CD4-positive, alpha-beta T cell (primary cell): ENCODE measurements at regions of chr17 and their contacts with region 1.

Region 1: DNA sequence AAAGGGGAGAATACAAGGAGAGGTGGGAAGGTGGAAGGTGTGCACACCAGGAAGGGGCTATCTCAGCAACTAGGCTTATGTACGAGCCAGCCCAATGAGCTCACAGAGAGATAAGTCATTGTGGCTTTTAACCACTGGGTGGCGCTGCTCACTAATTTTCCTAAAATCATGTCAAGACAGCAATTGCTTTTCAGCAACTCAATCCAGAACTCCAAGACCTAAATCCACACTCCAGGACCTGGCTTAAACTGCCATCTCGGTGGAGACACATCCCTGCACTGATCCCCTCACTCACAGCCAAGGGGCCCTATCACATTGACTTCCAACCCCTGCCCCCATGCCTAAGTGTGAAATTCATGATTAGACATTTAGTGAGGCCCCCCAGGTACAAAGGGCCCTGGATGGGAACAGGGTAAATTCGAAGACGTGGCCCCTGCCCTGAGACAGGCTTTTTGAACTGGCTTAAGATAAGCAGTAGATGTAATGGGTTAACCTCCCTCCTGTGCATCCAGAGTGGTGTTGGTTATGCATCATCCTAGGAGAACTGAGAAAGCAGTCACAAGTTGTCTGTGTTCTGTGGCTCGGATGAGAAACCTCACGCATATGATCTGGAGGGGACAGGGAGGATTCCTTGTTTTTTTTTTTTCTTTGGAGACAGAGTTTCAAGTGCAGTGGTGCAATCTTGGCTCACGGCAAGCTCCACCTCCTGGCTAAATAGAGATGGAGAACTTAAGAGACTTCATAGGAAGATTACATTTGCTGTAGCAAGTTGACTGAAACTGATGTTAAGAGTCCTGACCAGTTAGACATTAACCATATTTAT is 11.5 kb downstream of the CCL16 start:
- DNase-seq: peak; percentile 26 to 80 (median 56)
- ATAC-seq: no peak
- H3K4me3 ChIP-seq: no peak overlapping the region
- H3K4me3 Mint-ChIP-seq: no peak overlapping the region
- H3K27ac ChIP-seq: no peak overlapping the region
- H3K27ac Mint-ChIP-seq: no peak overlapping the region
- H3K4me1 ChIP-seq: peaks cover 3% of the 10 kb centered on the region
- H3K4me1 Mint-ChIP-seq: no peaks in the 10 kb centered on the region
- H3K27me3 ChIP-seq: no peaks in the 10 kb centered on the region
- H3K27me3 Mint-ChIP-seq: peaks cover 6% of the 10 kb centered on the region
- CTCF ChIP-seq: peak; percentile 72

Region 2: DNA sequence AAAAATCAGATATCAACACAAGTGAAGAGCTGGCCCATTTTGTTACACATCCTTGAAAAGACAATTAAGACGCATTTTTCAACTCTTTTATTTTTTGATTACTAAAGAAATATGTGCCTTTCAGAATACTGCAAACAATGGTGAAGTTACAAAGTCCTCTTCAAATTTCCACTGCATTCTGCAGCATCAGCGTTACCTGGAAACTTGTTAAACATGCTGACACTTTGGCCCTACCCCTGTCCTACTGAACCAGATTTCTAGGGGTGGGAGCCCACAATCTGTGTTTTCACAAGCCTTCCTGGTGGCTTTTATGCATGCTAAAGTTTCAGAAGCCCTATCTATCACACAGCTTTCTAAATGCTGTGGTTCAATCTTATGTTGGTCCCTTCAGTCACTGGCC is 21.3 kb after region 1 on chr17:
- CTCF ChIA-PET with region 1: no interaction called
- POLR2A ChIA-PET with region 1: no interaction called
- intact Hi-C with region 1: no loop called
- DNase-seq: no peak
- ATAC-seq: no peak
- H3K4me3 ChIP-seq: no peak overlapping the region
- H3K4me3 Mint-ChIP-seq: no peak overlapping the region
- H3K27ac ChIP-seq: no peak overlapping the region
- H3K27ac Mint-ChIP-seq: no peak overlapping the region
- H3K4me1 ChIP-seq: no peaks in the 10 kb centered on the region
- H3K4me1 Mint-ChIP-seq: no peaks in the 10 kb centered on the region
- H3K27me3 ChIP-seq: peaks cover 0 to 5% of the 10 kb centered on the region in 2 experiments
- H3K27me3 Mint-ChIP-seq: peaks cover 11% of the 10 kb centered on the region
- CTCF ChIP-seq: no peak

Region 3: DNA sequence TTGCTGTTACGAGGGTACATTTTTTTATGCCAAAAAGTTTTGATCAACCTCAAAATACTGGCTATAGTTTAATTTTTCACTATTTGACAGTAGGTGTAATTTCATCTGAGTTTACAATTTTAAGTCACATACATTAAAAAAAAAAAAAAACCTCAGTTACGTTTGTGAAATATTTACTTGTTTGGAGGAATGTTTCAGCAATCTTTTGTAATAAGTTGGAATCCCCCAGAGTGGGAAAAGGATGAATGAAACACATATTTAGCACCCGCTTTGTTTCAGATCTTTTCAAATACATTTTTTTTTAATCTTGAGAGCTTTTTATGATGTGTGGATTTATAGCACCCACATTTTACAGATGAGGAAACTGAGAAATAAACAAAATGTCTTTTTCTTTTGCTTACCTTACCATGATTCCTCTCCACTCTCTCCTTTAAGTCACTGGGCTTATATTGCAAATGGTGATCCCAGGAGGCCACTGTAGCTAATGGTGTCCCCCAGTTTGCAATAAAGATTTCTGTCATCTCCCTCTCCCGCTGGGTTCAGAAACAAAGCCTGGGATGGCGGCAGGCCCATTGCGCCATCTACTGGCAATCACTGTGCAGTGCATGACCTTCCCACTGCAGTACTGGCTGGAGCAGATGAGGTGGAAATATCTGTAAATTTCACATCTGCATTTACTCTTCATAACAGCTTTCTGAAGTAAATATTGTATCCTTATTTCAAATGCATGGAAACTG is 179.0 kb after region 1 on chr17:
- CTCF ChIA-PET with region 1: interaction called, 3 read pairs
- POLR2A ChIA-PET with region 1: no interaction called
- intact Hi-C with region 1: loop called (anchors 1 to 10 kb)
- DNase-seq: peak; percentile 24 to 79 (median 49)
- ATAC-seq: peak; percentile 71
- H3K4me3 ChIP-seq: no peak overlapping the region
- H3K4me3 Mint-ChIP-seq: no peak overlapping the region
- H3K27ac ChIP-seq: no peak overlapping the region
- H3K27ac Mint-ChIP-seq: no peak overlapping the region
- H3K4me1 ChIP-seq: peaks cover 4% of the 10 kb centered on the region
- H3K4me1 Mint-ChIP-seq: no peaks in the 10 kb centered on the region
- H3K27me3 ChIP-seq: peaks cover 13% of the 10 kb centered on the region in 2 experiments
- H3K27me3 Mint-ChIP-seq: peaks cover 33% of the 10 kb centered on the region
- CTCF ChIP-seq: peak; percentile 96

Region 4: GRCh38 chr17:37239690-37240334 is 1270.0 kb after region 1 on chr17:
- CTCF ChIA-PET with region 1: no interaction called
- POLR2A ChIA-PET with region 1: no interaction called
- intact Hi-C with region 1: loop called in 1 of 2 experiments (anchors 5 kb)
- DNase-seq: peak in 3 of 14 experiments; percentile 21 to 44 (median 31)
- ATAC-seq: no peak
- H3K4me3 ChIP-seq: no peak overlapping the region
- H3K4me3 Mint-ChIP-seq: no peak overlapping the region
- H3K27ac ChIP-seq: no peak overlapping the region
- H3K27ac Mint-ChIP-seq: no peak overlapping the region
- H3K4me1 ChIP-seq: no peaks in the 10 kb centered on the region
- H3K4me1 Mint-ChIP-seq: no peaks in the 10 kb centered on the region
- H3K27me3 ChIP-seq: no peaks in the 10 kb centered on the region
- H3K27me3 Mint-ChIP-seq: no peaks in the 10 kb centered on the region
- CTCF ChIP-seq: peak; percentile 63